ENCODE measurements at regions of chr15 and their contacts with region 1.

Region 1: DNA sequence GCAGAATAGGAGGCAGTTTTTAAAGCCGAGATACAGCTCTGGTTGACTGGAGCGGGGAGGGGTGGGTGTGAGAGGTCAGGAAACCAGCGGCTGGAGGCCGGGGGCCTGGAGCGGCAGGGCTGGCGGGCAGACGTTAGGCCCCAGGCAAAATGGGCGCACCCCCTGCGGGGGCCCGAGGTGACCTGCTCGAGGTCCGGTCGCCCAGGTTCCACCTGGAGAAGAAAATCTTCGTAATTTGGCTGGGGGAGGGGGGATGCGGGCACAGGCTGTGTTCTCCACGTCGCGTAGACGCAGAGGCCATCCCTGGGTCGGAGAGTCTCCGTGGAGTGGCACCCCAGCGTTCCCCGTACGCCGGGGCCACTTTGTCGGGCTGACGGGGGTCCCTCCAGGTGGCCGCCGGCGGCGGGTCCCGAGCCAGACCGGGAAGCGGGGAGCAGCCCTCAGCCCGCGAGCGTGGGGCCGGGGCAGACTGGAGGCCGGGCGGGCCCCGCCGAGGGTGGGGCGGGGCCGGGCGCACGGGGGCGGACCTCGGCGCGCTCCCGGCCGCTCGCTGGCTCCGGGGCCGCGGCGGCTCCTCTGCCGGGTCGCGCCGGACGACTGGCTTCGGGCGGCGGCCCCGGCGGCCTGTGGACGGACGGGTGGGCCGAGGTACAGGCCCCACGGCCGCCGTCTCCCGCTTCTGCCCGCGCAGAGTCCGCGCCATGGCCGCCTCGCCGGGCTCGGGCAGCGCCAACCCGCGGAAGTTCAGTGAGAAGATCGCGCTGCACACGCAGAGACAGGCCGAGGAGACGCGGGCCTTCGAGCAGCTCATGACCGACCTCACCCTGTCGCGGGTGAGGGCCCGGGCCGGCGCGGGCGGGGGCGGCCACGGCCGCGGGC is at the start of gene CRTC3:
- DNase-seq: peak; percentile 65
- ATAC-seq: peak; percentile 92
- H3K4me3 Mint-ChIP-seq: peak within 1 kb of the TSS; percentile 100
- H3K27ac Mint-ChIP-seq: peak within 1 kb of the TSS; percentile 87
- H3K4me1 Mint-ChIP-seq: peaks cover 42% of the 10 kb centered on the region
- H3K27me3 Mint-ChIP-seq: no peaks in the 10 kb centered on the region
- total RNA-seq, gene CRTC3: 62.3 to 79.1 TPM

Region 2: DNA sequence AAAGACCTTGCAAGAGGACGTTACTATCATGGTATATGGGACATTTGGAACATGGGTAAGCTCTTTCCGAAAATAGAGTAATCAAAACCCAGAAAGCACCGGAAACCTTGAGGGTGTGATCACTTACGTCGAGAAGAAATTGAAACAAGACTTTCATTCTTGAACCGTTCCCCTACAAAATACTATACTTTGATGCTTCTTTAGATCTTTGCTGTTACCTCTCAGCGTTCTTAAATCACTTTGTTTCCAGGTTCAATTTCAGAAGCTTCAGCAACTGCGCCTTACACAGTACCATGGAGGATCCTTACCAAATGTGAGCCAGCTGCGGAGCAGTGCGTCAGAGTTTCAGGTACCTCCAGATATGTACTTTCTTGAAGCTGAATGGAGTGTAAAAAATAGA is 10.2 kb after region 1 on chr15:
- CTCF ChIA-PET with region 1: interaction called, 12 read pairs
- DNase-seq: no peak
- ATAC-seq: peak; percentile 75
- H3K4me3 Mint-ChIP-seq: peak overlapping the region; percentile 79
- H3K27ac Mint-ChIP-seq: peak overlapping the region; percentile 96
- H3K4me1 Mint-ChIP-seq: peaks cover 53% of the 10 kb centered on the region
- H3K27me3 Mint-ChIP-seq: no peaks in the 10 kb centered on the region

Measured in activated CD8-positive, alpha-beta memory T cell treated with anti-CD3 and anti-CD28 coated beads, Interleukin-2, amount 10 ng/mL, durations not matched to agents 7 days and 5 days (primary cell).